ENCODE measurements at regions of chr2 and their contacts with region 1.

Region 1: GRCh38 chr2:174697255-174697654 is 67.0 kb downstream of the CHRNA1 start:
- DNase-seq: peak; percentile 42 to 81 (median 50)
- ATAC-seq: peak; percentile 89
- H3K4me3 ChIP-seq: no peak overlapping the region
- H3K4me3 Mint-ChIP-seq: no peak overlapping the region
- H3K27ac ChIP-seq: no peak overlapping the region
- H3K27ac Mint-ChIP-seq: no peak overlapping the region
- H3K4me1 ChIP-seq: no peaks in the 10 kb centered on the region
- H3K4me1 Mint-ChIP-seq: no peaks in the 10 kb centered on the region
- H3K27me3 ChIP-seq: no peaks in the 10 kb centered on the region
- H3K27me3 Mint-ChIP-seq: peaks cover 4% of the 10 kb centered on the region
- CTCF ChIP-seq: peak; percentile 86

Region 2: GRCh38 chr2:173414823-173415322 is 1282.4 kb before region 1 on chr2:
- CTCF ChIA-PET with region 1: no interaction called
- POLR2A ChIA-PET with region 1: no interaction called
- intact Hi-C with region 1: no loop called
- DNase-seq: no peak
- ATAC-seq: no peak
- H3K4me3 ChIP-seq: no peak overlapping the region
- H3K4me3 Mint-ChIP-seq: no peak overlapping the region
- H3K27ac ChIP-seq: no peak overlapping the region
- H3K27ac Mint-ChIP-seq: no peak overlapping the region
- H3K4me1 ChIP-seq: no peaks in the 10 kb centered on the region
- H3K4me1 Mint-ChIP-seq: no peaks in the 10 kb centered on the region
- H3K27me3 ChIP-seq: no peaks in the 10 kb centered on the region
- H3K27me3 Mint-ChIP-seq: peaks cover 22% of the 10 kb centered on the region
- CTCF ChIP-seq: no peak

Region 3: DNA sequence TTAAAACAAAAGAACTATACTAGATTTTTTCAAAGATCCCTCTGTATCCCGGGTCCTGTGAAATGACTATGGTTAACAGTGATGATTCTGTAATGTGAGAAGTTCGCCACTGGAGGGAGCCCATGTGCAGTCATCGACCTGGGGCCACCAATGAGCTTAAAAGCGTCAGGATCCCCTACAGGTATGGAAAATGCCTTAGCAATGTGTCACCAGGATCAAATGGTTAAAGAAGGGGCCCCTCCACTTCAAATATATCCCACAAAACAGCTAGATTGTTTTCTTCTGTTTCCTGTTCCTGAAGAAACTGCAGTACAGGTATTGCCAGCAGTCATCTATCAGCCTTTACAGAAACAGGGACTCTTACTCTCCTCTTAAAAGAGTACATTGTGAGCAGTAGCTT is 51.7 kb after region 1 on chr2:
- CTCF ChIA-PET with region 1: interaction called, 8 read pairs
- POLR2A ChIA-PET with region 1: interaction called, 5 read pairs
- intact Hi-C with region 1: loop called (anchors 1 to 2 kb)
- DNase-seq: peak; percentile 53 to 86 (median 66)
- ATAC-seq: peak; percentile 63
- H3K4me3 ChIP-seq: no peak overlapping the region
- H3K4me3 Mint-ChIP-seq: no peak overlapping the region
- H3K27ac ChIP-seq: no peak overlapping the region
- H3K27ac Mint-ChIP-seq: no peak overlapping the region
- H3K4me1 ChIP-seq: peaks cover 40% of the 10 kb centered on the region
- H3K4me1 Mint-ChIP-seq: peaks cover 36% of the 10 kb centered on the region
- H3K27me3 ChIP-seq: no peaks in the 10 kb centered on the region
- H3K27me3 Mint-ChIP-seq: no peaks in the 10 kb centered on the region
- CTCF ChIP-seq: peak; percentile 81

Region 4: DNA sequence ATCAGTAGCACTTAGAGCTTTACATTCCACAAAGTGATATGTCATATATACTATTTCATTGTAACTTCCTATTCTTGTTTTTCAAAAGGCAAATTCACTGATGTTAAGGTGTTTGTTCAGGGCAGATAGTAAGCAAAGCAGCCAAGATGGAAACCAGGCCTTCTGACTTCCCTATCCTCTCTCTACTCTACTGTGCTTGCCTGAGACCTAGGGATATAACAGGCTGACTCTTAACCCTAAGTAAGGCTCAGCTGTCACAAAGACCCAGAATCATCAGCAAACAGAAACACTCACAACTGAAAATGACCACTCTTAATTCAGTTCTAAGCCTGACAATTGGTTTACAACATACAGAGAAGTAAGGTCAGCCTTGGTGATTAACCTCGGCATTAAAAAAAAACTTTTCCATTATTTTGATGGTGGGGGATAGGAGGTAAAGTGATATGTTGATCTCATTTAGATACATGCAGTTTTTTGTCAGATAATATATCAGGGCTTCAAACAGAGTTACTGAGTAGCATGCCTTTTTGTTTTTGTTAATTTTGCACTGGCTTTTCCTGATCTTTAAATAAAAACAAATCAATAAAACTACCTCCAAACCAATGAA is 162.4 kb after region 1 on chr2:
- CTCF ChIA-PET with region 1: no interaction called
- POLR2A ChIA-PET with region 1: no interaction called
- intact Hi-C with region 1: no loop called
- DNase-seq: no peak
- ATAC-seq: no peak
- H3K4me3 ChIP-seq: no peak overlapping the region
- H3K4me3 Mint-ChIP-seq: no peak overlapping the region
- H3K27ac ChIP-seq: no peak overlapping the region
- H3K27ac Mint-ChIP-seq: no peak overlapping the region
- H3K4me1 ChIP-seq: no peaks in the 10 kb centered on the region
- H3K4me1 Mint-ChIP-seq: no peaks in the 10 kb centered on the region
- H3K27me3 ChIP-seq: no peaks in the 10 kb centered on the region
- H3K27me3 Mint-ChIP-seq: no peaks in the 10 kb centered on the region
- CTCF ChIP-seq: no peak

Region 5: GRCh38 chr2:175111200-175111657 is 414.0 kb after region 1 on chr2:
- CTCF ChIA-PET with region 1: no interaction called
- POLR2A ChIA-PET with region 1: no interaction called
- intact Hi-C with region 1: loop called in 1 of 2 experiments (anchors 5 kb)
- DNase-seq: peak in 3 of 14 experiments; percentile 66 to 68 (median 68)
- ATAC-seq: peak; percentile 75
- H3K4me3 ChIP-seq: no peak overlapping the region
- H3K4me3 Mint-ChIP-seq: no peak overlapping the region
- H3K27ac ChIP-seq: no peak overlapping the region
- H3K27ac Mint-ChIP-seq: peak overlapping the region; percentile 24
- H3K4me1 ChIP-seq: no peaks in the 10 kb centered on the region
- H3K4me1 Mint-ChIP-seq: no peaks in the 10 kb centered on the region
- H3K27me3 ChIP-seq: no peaks in the 10 kb centered on the region
- H3K27me3 Mint-ChIP-seq: no peaks in the 10 kb centered on the region
- CTCF ChIP-seq: peak; percentile 84

Region 6: GRCh38 chr2:176096986-176097819 is 1399.9 kb after region 1 on chr2:
- CTCF ChIA-PET with region 1: interaction called, 7 read pairs
- POLR2A ChIA-PET with region 1: no interaction called
- intact Hi-C with region 1: loop called (anchors 5 to 10 kb)
- DNase-seq: peak in 13 of 14 experiments; percentile 22 to 78 (median 46)
- ATAC-seq: peak; percentile 75
- H3K4me3 ChIP-seq: peak overlapping the region; percentile 52
- H3K4me3 Mint-ChIP-seq: peak overlapping the region; percentile 49
- H3K27ac ChIP-seq: no peak overlapping the region
- H3K27ac Mint-ChIP-seq: no peak overlapping the region
- H3K4me1 ChIP-seq: peaks cover 37% of the 10 kb centered on the region
- H3K4me1 Mint-ChIP-seq: peaks cover 36% of the 10 kb centered on the region
- H3K27me3 ChIP-seq: peaks cover 90 to 92% of the 10 kb centered on the region in 2 experiments
- H3K27me3 Mint-ChIP-seq: peaks cover 90% of the 10 kb centered on the region
- CTCF ChIP-seq: peak; percentile 62